ENCODE measurements at regions of chr6 and their contacts with region 1.

Region 1: DNA sequence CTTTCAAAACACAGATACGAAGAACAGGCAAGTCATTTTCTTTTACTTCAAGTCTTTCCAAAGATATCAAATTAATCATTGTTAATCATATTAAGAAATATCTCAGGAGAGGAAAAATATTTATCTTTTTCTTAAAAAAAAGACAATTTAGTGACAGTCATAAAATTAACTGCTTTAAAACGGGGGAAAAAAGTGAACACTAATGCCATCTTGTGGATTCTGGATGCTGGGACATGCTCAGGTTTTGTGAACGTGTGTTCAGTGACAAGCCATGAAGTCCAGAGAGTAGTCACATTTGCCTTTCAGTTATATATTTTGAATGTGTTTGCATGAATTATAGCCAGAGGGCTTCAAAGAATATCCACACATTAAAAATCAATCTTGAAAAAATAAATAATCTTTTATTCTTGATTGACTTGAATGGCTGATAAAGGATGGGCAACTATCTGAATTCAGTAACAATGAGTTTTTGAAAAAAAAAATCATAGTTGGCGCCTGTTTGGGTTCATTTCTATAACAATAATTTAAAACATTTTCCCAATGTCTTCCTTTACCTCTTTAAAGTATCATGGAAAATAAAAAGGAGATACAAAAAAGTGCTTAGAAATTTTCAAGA is 74.7 kb upstream of the NOX3 start:
- DNase-seq: peak in 4 of 14 experiments; percentile 8 to 55 (median 32)
- ATAC-seq: no peak
- H3K4me3 ChIP-seq: no peak overlapping the region
- H3K4me3 Mint-ChIP-seq: no peak overlapping the region
- H3K27ac ChIP-seq: no peak overlapping the region
- H3K27ac Mint-ChIP-seq: no peak overlapping the region
- H3K4me1 ChIP-seq: no peaks in the 10 kb centered on the region
- H3K4me1 Mint-ChIP-seq: peaks cover 7% of the 10 kb centered on the region
- H3K27me3 ChIP-seq: no peaks in the 10 kb centered on the region
- H3K27me3 Mint-ChIP-seq: no peaks in the 10 kb centered on the region
- CTCF ChIP-seq: peak; percentile 55

Region 2: DNA sequence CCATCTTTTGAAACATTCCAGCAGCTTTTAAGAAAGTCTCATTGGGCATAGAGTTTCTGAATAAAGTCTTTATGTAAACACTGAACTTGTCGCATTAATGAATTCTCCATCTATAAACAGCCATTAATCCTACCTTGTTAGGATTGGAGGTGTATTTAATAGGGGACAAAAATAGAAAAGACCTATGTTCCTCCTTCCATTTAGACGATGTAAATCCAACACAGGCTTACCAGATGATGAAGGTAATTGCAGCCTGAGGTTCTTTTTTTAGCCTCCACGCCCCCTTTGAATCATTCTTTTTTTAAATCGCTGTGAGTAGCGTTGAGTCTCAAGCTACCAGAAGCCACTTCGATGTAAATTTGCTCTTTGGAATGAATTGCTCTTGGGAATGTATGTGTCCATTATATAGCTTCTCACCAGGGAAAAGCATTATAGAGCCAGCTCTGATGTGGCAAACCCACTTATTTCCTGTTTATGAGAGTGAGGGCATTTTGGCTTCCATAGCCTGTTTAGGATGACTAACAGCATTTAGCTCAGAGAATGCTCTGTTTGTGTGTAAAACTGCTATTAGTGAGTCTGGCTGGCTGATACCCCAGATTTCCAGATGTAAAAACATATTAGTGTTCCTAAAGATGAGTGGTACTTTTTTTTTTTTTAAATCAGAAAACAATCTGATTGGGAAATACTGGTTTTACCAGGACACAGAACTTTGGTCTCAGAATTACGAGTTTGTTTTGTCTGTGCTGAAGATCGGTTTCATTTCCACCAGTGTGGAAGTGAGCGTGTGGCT is 341.4 kb before region 1 on chr6:
- CTCF ChIA-PET with region 1: no interaction called
- POLR2A ChIA-PET with region 1: no interaction called
- intact Hi-C with region 1: loop called in 1 of 2 experiments (anchors 10 kb)
- DNase-seq: peak in 3 of 14 experiments; percentile 32 to 39 (median 38)
- ATAC-seq: peak; percentile 43
- H3K4me3 ChIP-seq: peak overlapping the region; percentile 7
- H3K4me3 Mint-ChIP-seq: peak overlapping the region; percentile 4
- H3K27ac ChIP-seq: no peak overlapping the region
- H3K27ac Mint-ChIP-seq: no peak overlapping the region
- H3K4me1 ChIP-seq: peaks cover 19% of the 10 kb centered on the region
- H3K4me1 Mint-ChIP-seq: peaks cover 20% of the 10 kb centered on the region
- H3K27me3 ChIP-seq: no peaks in the 10 kb centered on the region
- H3K27me3 Mint-ChIP-seq: no peaks in the 10 kb centered on the region
- CTCF ChIP-seq: no peak

Region 3: GRCh38 chr6:155706341-155706740 is 176.0 kb after region 1 on chr6:
- CTCF ChIA-PET with region 1: no interaction called
- POLR2A ChIA-PET with region 1: no interaction called
- intact Hi-C with region 1: no loop called
- DNase-seq: no peak
- ATAC-seq: no peak
- H3K4me3 ChIP-seq: no peak overlapping the region
- H3K4me3 Mint-ChIP-seq: no peak overlapping the region
- H3K27ac ChIP-seq: no peak overlapping the region
- H3K27ac Mint-ChIP-seq: no peak overlapping the region
- H3K4me1 ChIP-seq: no peaks in the 10 kb centered on the region
- H3K4me1 Mint-ChIP-seq: no peaks in the 10 kb centered on the region
- H3K27me3 ChIP-seq: no peaks in the 10 kb centered on the region
- H3K27me3 Mint-ChIP-seq: peaks cover 3% of the 10 kb centered on the region
- CTCF ChIP-seq: no peak

Region 4: GRCh38 chr6:155765275-155766194 is 235.2 kb after region 1 on chr6:
- CTCF ChIA-PET with region 1: no interaction called
- POLR2A ChIA-PET with region 1: no interaction called
- intact Hi-C with region 1: no loop called
- DNase-seq: no peak
- ATAC-seq: no peak
- H3K4me3 ChIP-seq: no peak overlapping the region
- H3K4me3 Mint-ChIP-seq: no peak overlapping the region
- H3K27ac ChIP-seq: no peak overlapping the region
- H3K27ac Mint-ChIP-seq: no peak overlapping the region
- H3K4me1 ChIP-seq: no peaks in the 10 kb centered on the region
- H3K4me1 Mint-ChIP-seq: no peaks in the 10 kb centered on the region
- H3K27me3 ChIP-seq: no peaks in the 10 kb centered on the region
- H3K27me3 Mint-ChIP-seq: no peaks in the 10 kb centered on the region
- CTCF ChIP-seq: no peak